Esophagus squamous epithelium (tissue), 5 donors: ENCODE measurements at regions of chr2 and their contacts with region 1.

Region 1: GRCh38 chr2:16507655-16508489 is 157.8 kb downstream of the CYRIA start:
- DNase-seq: no peak
- H3K4me3 ChIP-seq: peak overlapping the region in 3 of 4 donors; percentile 30 to 63 (median 43)
- H3K27ac ChIP-seq: no peak overlapping the region
- H3K4me1 ChIP-seq: peaks cover 8 to 12% (median 9%) of the 10 kb centered on the region in 3 donors
- H3K27me3 ChIP-seq: peaks cover 0 to 58% (median 5%) of the 10 kb centered on the region in 4 donors
- CTCF ChIP-seq: peak in 5 of 6 experiments; percentile 42 to 73 (median 51)
- POLR2A ChIP-seq: no peak

Region 2: GRCh38 chr2:15640261-15640711 is 867.6 kb before region 1 on chr2:
- intact Hi-C with region 1: loop called (anchors 10 kb)
- DNase-seq: no peak
- H3K4me3 ChIP-seq: no peak overlapping the region
- H3K27ac ChIP-seq: no peak overlapping the region
- H3K4me1 ChIP-seq: peaks cover 0 to 23% (median 3%) of the 10 kb centered on the region in 3 donors
- H3K27me3 ChIP-seq: no peaks in the 10 kb centered on the region
- CTCF ChIP-seq: no peak
- POLR2A ChIP-seq: no peak

Region 3: DNA sequence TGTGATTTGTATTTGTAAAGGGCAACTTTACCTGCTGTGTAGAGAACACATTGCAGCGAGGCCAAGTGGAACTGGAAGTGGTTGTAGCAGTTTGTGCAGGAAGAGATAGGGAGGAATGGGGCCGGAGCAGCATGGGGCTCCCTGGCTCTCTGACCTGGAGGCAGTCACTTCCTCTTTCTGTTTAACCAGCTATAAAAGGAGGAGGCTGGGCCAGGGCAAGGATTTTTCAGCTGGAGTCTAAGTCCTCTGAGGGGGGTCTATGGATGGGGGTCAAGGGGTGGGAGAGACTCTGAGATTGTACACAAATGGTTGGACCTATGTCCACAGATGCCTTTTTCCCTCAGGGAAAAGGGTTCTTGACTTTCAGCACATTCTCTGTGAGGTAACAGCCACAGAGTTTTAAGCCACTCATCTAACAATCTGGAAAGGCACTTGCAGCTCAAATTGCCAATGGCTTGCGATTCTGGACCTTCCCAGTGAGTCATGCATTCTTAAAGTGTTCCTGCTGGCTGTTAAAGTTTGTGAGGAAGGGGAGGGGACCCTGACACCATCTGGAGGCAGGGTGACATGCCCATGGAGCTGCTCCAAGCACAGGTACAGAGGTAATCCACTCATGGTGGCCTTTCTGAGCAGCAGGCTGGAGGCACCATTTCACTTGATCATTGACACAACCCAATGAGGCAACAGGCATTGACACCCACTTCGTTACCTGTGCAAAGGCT is 189.2 kb before region 1 on chr2:
- intact Hi-C with region 1: no loop called
- DNase-seq: no peak
- H3K4me3 ChIP-seq: no peak overlapping the region
- H3K27ac ChIP-seq: no peak overlapping the region
- H3K4me1 ChIP-seq: no peaks in the 10 kb centered on the region
- H3K27me3 ChIP-seq: no peaks in the 10 kb centered on the region
- CTCF ChIP-seq: no peak
- POLR2A ChIP-seq: no peak

Region 4: GRCh38 chr2:16330571-16330970 is 177.3 kb before region 1 on chr2:
- intact Hi-C with region 1: no loop called
- DNase-seq: no peak
- H3K4me3 ChIP-seq: no peak overlapping the region
- H3K27ac ChIP-seq: no peak overlapping the region
- H3K4me1 ChIP-seq: no peaks in the 10 kb centered on the region
- H3K27me3 ChIP-seq: no peaks in the 10 kb centered on the region
- CTCF ChIP-seq: no peak
- POLR2A ChIP-seq: no peak

Region 5: DNA sequence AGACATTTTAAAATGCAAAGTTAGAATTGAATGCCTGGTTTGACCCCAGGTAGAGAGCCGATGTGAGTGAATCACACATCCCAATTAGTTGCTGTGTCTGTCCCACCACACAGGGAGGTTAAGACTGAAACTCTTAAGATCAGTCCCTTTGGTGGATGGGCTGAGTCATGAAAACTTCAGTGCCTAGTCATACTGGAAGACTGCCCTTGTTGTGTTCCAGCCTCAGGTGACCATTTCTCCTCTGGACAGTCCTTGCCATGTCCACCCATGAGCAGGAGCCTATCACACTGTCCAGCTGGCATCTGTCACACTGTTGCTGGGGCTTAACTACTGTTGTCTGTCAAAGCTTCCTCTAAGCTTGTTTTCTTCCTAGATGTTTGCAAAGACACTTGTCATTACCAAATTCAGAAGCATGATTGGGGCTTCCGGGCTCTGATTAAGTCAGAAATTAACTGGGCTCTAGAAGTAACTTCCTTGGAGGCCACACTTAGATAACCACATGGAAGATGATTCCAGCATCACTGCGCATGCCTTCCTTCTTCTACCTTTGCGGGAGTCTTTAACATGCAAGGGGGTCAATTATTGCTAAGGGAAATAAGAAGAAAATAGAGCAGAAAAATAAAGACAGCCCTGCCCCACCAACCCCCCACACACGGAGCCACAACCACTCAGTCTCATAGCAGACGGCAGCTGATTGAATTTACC is 136.5 kb after region 1 on chr2:
- intact Hi-C with region 1: no loop called
- DNase-seq: no peak
- H3K4me3 ChIP-seq: no peak overlapping the region
- H3K27ac ChIP-seq: no peak overlapping the region
- H3K4me1 ChIP-seq: peaks cover 0 to 49% (median 2%) of the 10 kb centered on the region in 3 donors
- H3K27me3 ChIP-seq: no peaks in the 10 kb centered on the region
- CTCF ChIP-seq: no peak
- POLR2A ChIP-seq: no peak